ENCODE measurements at regions of chr18 and their contacts with region 1.

Region 1: GRCh38 chr18:623761-624620 is 27.2 kb downstream of the CLUL1 start:
- DNase-seq: peak; percentile 45

Region 2: DNA sequence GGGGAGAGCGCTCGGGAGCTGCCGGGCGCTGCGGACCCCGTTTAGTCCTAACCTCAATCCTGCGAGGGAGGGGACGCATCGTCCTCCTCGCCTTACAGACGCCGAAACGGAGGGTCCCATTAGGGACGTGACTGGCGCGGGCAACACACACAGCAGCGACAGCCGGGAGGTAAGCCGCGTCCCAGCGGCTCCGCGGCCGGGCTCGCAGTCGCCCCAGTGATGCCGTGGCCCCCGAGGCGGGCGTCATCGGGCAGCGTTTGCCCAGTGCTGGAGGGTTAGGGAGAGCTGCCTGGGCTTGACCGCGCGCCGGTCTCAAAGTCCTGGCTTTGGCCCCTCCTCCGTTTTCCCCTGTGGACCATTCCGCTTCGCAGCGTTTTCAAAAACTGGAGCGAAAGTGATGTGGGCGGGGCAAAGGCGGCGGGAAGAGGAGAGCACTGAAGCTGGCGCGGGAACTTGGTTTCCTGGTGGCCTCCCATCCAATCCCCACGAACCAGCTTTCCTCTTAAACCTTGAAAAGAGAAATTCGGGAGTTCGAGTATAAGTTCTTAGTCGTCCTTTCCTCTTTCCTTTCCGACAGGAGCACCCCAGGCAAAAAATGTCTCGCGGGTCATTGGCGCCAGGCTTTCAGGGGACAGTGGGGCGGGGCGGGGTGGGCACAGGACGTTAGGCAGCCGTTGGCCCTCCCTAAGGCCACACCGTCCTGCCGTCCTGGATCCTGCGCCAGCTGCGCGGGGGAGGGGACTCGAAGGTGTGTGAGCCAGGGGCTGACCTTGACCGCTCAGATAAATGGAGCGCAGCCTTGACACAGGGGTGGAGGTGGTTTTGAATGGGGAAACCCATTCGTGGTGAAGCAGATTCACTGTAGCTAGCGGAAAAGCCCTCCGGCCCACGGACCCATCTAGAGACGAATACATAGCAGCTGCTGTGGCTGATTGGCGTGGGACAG is 34.3 kb after region 1 on chr18:
- CTCF ChIA-PET with region 1: interaction called, 4 read pairs
- POLR2A ChIA-PET with region 1: interaction called, 10 read pairs
- DNase-seq: peak; percentile 60

Region 3: DNA sequence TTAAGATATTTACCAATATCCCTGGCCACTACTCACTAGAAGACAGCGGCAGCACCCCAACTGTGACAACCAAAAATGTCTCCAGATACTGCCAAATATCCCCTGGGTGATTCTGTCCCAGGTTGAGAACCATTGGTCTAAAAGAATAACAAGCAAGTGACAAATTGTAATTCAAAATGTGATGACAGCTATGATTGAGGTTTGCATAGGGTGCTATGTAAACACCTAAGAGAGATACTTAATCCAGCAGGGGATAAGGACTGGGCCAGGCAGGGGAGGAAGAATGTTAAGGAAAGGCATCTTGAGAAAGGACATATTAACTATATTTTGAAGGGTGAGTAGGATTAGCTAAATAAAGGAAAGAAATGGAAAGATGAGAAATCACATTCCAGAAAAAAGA is 126.5 kb after region 1 on chr18:
- CTCF ChIA-PET with region 1: no interaction called
- POLR2A ChIA-PET with region 1: no interaction called
- DNase-seq: no peak

Region 4: DNA sequence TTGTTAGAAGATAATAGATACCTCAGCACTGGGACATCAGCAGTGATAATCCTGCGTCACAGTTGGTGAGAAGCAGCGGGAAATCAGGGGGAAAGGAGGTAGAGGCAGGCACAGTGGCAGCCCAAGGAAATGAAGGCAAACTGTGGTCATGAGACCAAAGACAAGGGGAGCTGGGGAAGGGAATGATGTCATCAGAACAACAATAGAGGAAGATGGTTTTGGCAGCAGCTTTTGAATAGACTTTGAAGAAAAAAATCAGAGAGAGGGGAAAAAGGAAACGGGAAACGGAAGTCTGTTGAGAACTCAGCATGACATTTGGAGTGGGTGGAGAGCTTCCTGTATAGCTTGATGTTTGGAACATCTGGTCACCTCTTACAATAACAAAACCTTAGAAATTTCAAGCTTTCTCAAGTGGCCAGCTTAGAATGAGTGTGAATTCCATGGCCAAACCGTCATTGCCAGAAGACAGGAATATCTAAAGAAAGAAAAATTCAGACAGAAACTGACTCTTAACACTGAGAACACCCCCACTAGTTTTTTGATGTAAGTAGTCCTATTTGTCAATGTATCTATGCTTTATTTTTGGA is 206.4 kb after region 1 on chr18:
- CTCF ChIA-PET with region 1: interaction called, 12 read pairs
- POLR2A ChIA-PET with region 1: no interaction called
- DNase-seq: no peak